BJ (cell line): ENCODE measurements at regions of chr18 and their contacts with region 1.

Region 1: DNA sequence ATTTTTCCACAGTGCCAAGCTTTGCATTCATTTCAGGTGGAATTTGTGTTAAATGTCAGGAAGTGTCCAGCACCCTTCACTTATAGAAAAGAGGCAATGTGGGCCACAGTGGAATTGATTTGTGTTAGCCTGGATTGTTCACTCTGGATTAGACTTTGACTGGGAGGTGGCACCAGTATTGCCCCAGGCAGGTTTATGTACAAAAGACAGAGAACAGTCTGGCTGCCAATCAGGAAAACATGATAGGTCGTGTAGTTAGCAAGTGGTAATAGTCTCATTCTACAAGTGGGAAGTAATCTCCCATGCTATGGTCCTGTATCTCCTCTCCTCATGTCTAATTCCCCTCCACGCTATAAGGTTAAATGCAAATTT is 45.6 kb downstream of the RAB27B start:
- DNase-seq: no peak
- H3K4me3 ChIP-seq: no peak overlapping the region
- H3K27me3 ChIP-seq: no peaks in the 10 kb centered on the region
- CTCF ChIP-seq: no peak

Region 2: DNA sequence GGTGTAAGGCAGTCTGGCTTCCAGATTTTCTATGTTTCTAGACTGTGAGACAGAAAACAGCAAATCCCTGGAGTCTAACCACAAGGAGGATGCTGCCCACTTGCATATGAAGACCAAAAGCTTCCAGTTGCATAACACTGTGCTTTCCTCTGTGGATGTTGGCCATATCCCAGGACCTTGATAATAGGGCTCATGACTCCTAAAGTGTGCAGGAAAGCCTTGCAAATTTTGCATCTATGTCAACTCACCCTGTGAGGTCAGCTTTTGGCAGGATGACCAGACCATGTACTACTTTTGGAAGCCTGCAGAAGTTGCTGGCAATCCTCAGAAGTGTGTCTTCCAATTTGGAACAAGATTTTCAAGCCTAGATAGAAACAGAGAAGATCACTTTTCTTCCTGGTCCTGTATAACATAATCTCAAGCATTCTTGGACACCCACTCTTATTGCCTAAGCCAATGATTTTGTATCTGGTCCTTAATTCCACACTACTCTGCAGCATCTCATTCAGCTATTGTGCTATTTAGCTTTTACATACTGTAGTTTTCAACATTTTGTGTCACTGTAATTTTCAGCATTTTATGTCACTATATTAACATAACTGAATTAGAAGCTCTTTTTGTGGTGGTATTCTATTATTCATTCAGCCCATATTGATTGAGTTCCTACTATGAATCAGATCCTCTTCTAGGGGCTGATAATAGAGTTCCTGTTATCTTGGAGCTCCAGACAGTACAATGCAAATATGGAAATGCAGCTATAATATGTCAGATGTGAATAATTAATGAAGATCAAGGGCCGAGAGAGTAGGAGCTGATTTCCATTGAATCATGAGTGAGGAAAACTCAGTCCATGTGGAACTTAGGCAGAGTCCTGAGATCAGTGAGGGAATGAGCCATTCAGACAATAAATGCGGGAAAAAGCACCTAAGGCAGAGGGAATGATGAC is 130.9 kb before region 1 on chr18:
- CTCF ChIA-PET with region 1: no interaction called
- POLR2A ChIA-PET with region 1: no interaction called
- DNase-seq: peak; percentile 87
- H3K4me3 ChIP-seq: no peak overlapping the region
- H3K27me3 ChIP-seq: no peaks in the 10 kb centered on the region
- CTCF ChIP-seq: peak; percentile 21; the same call in 1 of the 2 replicates

Region 3: DNA sequence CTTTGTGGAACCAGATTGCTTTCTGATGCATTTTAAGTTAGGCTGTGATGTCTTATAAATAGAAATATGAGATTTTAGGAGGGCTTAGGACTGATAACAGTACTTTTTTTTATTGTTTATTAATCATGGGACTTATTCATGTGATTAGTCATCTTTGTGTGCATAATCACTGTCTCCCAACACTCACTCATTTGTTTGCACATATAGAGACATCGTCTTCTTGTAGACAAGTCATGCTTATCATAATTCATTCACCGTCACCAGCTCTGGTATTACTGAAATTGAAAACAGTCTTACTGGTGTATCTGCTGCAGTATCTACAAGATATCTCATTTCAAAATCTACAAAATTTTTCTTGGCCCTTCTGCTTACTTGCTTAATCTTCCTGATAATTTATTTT is 1823.1 kb after region 1 on chr18:
- CTCF ChIA-PET with region 1: no interaction called
- POLR2A ChIA-PET with region 1: interaction called, 11 read pairs
- DNase-seq: no peak
- H3K4me3 ChIP-seq: no peak overlapping the region
- H3K27me3 ChIP-seq: no peaks in the 10 kb centered on the region
- CTCF ChIP-seq: no peak